ENCODE measurements at regions of chrX and their contacts with region 1.

Region 1: GRCh38 chrX:2595258-2595657 is 94.5 kb upstream of the DHRSX start:
- DNase-seq: no peak
- ATAC-seq: no peak
- H3K4me3 ChIP-seq: no peak overlapping the region
- H3K27ac ChIP-seq: no peak overlapping the region
- H3K4me1 ChIP-seq: peaks cover 0 to 5% of the 10 kb centered on the region in 2 donors
- H3K27me3 ChIP-seq: no peaks in the 10 kb centered on the region
- CTCF ChIP-seq: no peak

Region 2: DNA sequence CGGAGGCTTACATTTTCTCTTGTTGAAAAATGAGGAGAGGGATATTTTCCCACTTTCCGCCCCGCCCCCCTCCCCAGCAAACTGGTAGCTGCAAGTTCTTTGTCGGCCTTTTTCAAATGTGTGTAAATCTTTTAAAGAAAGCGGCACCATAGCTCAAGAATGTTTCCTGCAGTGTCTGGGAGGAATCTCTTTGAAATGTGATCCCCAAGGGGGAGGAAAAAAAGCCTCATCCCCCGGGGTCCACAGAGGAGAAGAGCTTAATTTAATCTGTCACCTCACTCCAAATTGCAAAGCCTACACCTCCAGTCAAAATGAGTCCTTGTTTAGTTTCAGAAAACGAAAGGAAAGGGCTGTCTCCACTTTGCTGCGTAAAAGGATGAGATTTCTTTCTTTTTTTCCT is 945.6 kb before region 1 on chrX:
- intact Hi-C with region 1: loop called in 1 of 2 experiments (anchors 10 kb)
- DNase-seq: no peak
- ATAC-seq: no peak
- H3K4me3 ChIP-seq: no peak overlapping the region
- H3K27ac ChIP-seq: no peak overlapping the region
- H3K4me1 ChIP-seq: no peaks in the 10 kb centered on the region
- H3K27me3 ChIP-seq: peaks cover 0 to 20% of the 10 kb centered on the region in 2 donors
- CTCF ChIP-seq: no peak

Region 3: DNA sequence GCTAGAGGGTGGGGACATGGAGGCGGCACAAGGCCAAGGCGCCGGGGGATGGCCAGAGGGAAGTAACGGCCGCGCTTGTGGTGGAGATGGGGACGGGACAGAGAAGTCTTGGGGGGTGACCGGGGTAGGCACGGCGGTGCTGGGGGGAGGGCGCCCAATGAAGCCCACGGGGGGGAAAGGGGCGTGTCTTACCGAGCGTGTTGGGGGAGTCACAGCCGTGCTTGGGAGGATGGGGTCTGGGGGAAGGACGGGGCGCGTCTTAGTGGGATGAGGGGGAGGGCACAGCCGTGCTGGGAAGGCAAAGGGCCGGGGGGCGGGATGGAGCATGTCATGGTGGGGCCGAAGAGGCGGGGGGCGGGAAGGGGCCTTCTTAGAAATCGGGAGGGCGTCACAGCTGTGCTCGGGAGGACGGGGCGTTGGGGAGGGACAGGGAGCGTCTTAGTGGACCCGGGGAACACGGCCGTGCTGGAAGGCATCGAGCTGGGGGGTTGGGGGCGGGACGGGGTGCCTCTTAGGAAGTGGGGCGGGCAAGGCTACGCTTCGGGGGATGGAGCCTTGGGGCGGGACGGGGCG is 333.0 kb after region 1 on chrX:
- intact Hi-C with region 1: no loop called
- DNase-seq: peak in 2 of 4 donors; percentile 77 to 87
- ATAC-seq: peak; percentile 46
- H3K4me3 ChIP-seq: peak overlapping the region; percentile 50 to 61
- H3K27ac ChIP-seq: peak overlapping the region; percentile 77 to 95
- H3K4me1 ChIP-seq: no peaks in the 10 kb centered on the region
- H3K27me3 ChIP-seq: no peaks in the 10 kb centered on the region
- CTCF ChIP-seq: no peak

Measured in left lung (tissue), 14 donors.